Psoas muscle (tissue), 8 donors: ENCODE measurements at regions of chr20 and their contacts with region 1.

Region 1: GRCh38 chr20:63858393-63859165 is 2.7 kb upstream of the ABHD16B start:
- DNase-seq: no peak
- ATAC-seq: peak in 3 of 4 donors; percentile 16 to 36 (median 27)
- H3K4me3 ChIP-seq: no peak overlapping the region
- H3K27ac ChIP-seq: peak overlapping the region; percentile 36
- H3K4me1 ChIP-seq: peaks cover 18% of the 10 kb centered on the region
- H3K27me3 ChIP-seq: peaks cover 0 to 38% (median 0%) of the 10 kb centered on the region in 3 donors
- CTCF ChIP-seq: peak; percentile 23

Region 2: DNA sequence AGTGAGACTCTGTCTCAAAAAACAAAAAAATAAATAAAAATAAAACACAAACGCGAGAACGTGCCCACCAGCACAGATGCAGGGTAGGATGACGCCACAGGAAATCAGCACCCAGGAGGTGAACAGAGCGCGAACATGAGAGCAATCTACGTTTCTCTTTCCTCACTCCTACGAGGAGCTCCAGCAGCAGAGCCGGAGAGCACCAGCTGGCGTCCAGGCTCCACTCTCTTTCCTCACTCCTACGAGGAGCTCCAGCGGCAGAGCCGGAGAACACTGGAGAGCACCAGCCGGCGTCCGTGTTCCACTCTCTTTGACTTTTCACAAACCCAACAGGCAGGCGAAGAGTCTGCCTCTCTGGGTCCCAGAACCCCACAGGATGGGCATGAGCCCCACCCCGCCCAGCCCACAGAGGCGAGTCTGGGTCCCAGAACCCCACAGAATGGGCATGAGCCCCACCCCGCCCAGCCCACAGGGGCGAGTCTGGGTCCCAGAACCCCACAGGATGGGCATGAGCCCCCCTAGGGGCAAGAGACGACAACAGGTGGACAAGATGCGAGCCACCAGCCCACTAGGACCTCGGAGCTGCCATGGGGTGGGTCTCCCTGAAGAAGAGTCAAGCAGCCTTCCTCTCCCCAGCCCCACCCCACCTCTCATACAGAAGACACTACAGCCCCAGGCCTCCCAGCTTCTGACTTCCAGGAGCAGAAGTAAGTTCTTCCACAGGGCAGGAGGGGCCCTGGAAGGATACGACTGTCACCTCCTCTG is 47.7 kb before region 1 on chr20:
- intact Hi-C with region 1: loop called in 1 of 2 experiments (anchors 1 kb)
- DNase-seq: no peak
- ATAC-seq: no peak
- H3K4me3 ChIP-seq: no peak overlapping the region
- H3K27ac ChIP-seq: no peak overlapping the region
- H3K4me1 ChIP-seq: no peaks in the 10 kb centered on the region
- H3K27me3 ChIP-seq: no peaks in the 10 kb centered on the region
- CTCF ChIP-seq: no peak

Region 3: DNA sequence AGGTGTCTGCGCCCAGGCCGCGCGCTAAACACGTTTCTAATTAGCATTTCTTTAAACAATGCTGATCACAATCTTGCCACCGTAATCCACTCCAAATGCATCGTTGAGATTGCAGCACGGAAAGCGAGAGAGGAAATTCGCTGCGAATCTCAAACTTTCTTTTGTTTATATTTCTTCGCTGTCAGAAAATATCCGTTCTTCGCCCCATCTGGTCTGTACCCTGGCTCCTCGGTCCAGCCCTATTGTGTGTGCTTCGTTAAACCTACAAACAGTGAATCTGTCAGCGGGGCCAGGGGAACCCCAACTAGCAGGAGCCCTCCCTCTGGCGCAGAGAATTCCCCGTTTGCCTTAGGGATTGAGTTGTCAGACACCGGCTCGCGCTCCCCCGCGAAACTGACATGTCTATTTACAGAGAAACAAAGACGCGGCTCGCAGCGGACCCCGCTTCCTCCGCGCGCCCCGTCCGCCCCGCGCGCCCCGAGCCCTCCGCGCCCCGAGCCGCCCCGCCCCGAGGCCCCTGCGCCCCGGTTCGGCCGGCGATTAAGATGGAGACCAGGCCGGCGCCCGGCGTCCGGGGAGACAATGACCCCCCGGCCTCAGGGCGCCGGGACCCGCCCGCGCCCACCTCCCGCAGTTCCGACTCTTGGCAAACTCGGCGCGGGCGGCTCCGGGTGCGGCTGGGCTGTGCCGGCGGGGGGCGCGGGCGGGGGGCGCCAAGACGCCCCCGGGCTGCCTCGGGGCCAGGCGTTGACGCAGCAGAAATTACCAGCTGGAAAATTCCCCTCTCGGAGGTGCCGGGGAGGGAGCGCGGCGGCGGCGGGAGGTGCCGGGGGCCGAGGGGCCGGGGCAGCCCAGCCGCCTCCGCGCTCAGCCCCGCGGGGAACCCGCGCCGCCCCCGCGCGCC is 28.4 kb before region 1 on chr20:
- intact Hi-C with region 1: loop called in 1 of 2 experiments (anchors 2 kb)
- DNase-seq: no peak
- ATAC-seq: no peak
- H3K4me3 ChIP-seq: peak overlapping the region; percentile 69
- H3K27ac ChIP-seq: peak overlapping the region; percentile 50
- H3K4me1 ChIP-seq: peaks cover 16% of the 10 kb centered on the region
- H3K27me3 ChIP-seq: peaks cover 0 to 20% (median 0%) of the 10 kb centered on the region in 3 donors
- CTCF ChIP-seq: no peak